ENCODE measurements at regions of chr3 and their contacts with region 1.

Region 1: DNA sequence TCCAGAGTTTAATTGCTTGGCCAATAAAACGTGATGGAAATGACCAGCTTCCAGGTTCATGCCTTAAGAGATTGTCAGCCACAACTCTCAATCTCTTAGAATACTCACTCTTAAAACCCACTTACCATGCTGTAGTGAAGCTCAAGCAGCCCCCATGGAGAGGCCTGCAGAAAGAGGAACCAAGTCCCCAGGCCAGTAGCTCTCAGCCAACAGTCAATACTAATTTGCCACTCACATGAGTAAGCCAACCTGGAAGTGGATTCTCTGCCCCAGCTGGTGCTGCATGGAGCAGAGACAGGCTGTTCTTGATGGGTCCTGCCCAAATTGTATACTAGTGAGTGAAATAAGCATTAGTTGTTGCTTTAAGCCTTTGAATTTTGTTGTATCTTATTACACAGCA is 155.9 kb downstream of the OXSM start:
- DNase-seq: no peak
- H3K4me3 ChIP-seq: no peak overlapping the region
- H3K4me1 ChIP-seq: no peaks in the 10 kb centered on the region
- H3K27me3 ChIP-seq: peaks cover 4% of the 10 kb centered on the region; the same call in 1 of the 2 replicates

Region 2: DNA sequence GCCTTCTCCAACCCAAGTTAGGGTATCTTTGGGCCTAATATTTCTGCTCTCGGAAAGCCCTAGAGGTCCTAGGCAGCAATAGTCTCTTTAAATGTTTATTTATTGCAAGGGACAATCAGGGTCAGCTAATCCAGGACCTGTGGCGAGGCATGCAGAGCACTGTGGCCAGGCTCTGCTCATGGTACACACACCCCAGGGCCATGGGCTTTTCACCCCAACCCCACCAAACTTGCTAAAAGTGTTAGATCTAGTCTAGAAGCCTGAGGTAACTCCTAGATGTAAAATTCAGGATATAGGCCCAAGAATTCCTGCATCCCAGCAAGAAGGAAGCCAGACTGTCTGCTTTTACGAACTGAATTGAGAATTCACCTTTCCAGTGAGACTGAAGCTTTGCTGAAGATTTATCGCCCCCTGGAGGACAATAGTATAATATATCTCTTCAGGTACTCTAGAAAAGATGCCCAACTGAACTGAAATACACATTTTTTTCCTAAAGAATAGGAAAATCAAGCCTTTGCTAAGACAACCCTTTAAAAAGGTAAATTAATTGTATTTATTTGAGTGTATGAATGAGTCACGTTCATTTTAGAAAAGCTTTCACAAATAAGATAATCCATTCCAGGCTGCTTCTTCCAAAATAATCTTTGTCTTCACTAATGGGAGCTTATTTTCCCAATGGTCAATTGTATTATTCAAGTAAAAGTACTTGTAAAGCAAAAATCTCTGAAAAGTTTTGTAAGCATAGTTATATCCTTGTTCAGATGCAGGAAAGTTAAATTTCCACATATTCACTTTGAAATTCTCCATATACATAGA is 766.6 kb after region 1 on chr3:
- in situ Hi-C with region 1: loop called (anchors 25 kb)
- DNase-seq: peak; percentile 8 to 40
- H3K4me3 ChIP-seq: no peak overlapping the region
- H3K4me1 ChIP-seq: no peaks in the 10 kb centered on the region
- H3K27me3 ChIP-seq: no peaks in the 10 kb centered on the region

Region 3: GRCh38 chr3:26840272-26840870 is 894.5 kb after region 1 on chr3:
- in situ Hi-C with region 1: no loop called
- DNase-seq: no peak
- H3K4me3 ChIP-seq: no peak overlapping the region
- H3K4me1 ChIP-seq: no peaks in the 10 kb centered on the region
- H3K27me3 ChIP-seq: no peaks in the 10 kb centered on the region

Measured in HAP-1 (cell line).